ENCODE measurements at regions of chr3 and their contacts with region 1.

Region 1: GRCh38 chr3:152452318-152452717 is 183.6 kb downstream of the MBNL1 start:
- DNase-seq: no peak
- H3K4me3 ChIP-seq: no peak overlapping the region
- H3K4me3 Mint-ChIP-seq: peak overlapping the region in 2 of 8 donors; percentile 2 to 17
- H3K27ac ChIP-seq: no peak overlapping the region
- H3K27ac Mint-ChIP-seq: peak overlapping the region in 5 of 7 donors; percentile 0 to 72 (median 43)
- H3K4me1 ChIP-seq: peaks cover 64% of the 10 kb centered on the region
- H3K4me1 Mint-ChIP-seq: peaks cover 34 to 63% (median 44%) of the 10 kb centered on the region in 4 donors
- H3K27me3 ChIP-seq: no peaks in the 10 kb centered on the region
- H3K27me3 Mint-ChIP-seq: no peaks in the 10 kb centered on the region

Region 2: GRCh38 chr3:152466784-152467183 is 14.5 kb after region 1 on chr3:
- CTCF ChIA-PET with region 1: interaction called, 12 read pairs
- POLR2A ChIA-PET with region 1: interaction called, 3 read pairs
- intact Hi-C with region 1: loop called (anchors 2 kb)
- DNase-seq: peak in 3 of 5 donors; percentile 31 to 40 (median 36)
- H3K4me3 ChIP-seq: no peak overlapping the region
- H3K4me3 Mint-ChIP-seq: peak overlapping the region in 1 of 8 donors; percentile 54
- H3K27ac ChIP-seq: no peak overlapping the region
- H3K27ac Mint-ChIP-seq: peak overlapping the region in 5 of 7 donors; percentile 36 to 83 (median 61)
- H3K4me1 ChIP-seq: peaks cover 4% of the 10 kb centered on the region
- H3K4me1 Mint-ChIP-seq: peaks cover 5 to 15% (median 13%) of the 10 kb centered on the region in 4 donors
- H3K27me3 ChIP-seq: no peaks in the 10 kb centered on the region
- H3K27me3 Mint-ChIP-seq: no peaks in the 10 kb centered on the region